ENCODE measurements at regions of chr1 and their contacts with region 1.

Region 1: DNA sequence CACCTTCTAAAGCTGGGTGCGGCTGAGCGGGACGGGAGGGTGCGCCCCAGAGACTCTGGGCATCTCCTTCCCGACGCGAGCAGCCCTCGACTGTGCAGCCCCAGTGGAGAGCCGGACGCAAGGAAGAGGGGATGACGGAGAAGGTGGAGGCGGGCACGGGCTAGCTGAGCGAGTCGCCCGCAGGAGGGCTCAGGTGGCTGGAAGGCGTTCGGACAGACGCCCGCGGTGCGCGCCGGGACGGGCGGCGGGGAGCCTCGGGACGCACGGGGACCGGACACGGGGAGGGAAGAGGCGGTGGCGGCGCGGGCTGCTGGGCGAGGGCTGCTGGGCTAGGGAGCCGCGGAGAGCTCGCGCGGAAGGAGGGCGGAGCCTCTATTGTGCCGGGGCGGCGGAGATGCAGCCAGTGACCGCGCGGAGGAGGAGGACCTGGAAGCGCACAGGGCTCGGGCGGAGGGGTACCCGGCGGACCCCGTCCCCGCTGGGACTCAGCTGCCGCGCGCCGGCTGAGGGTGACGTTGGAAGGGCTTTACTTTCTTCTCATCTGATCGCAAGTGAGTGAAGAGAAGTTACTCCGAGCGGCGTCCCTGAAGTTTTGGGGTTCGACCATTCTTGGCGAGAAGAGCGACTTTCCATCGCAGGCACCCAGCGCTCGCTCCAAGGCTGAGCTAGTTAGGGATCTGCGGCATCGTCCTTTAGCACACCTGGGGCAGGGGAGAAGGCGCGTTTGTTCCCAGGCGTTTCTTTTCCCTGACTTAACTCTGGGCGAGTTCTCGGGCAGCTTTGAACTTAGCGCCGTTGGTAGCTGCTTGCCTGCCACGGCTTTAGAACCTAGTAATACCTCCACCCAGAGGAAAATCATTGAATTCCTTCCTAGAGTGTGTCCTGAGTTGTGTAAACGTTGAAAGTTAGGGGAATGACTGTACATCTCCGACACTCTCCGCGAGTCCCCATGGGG is at the start of gene OLFML2B:
- DNase-seq: peak; percentile 70
- H3K4me3 ChIP-seq: peak within 1 kb of the TSS; percentile 9 to 55 (median 45)
- H3K27ac ChIP-seq: no peak within 1 kb of the TSS
- H3K4me1 ChIP-seq: peaks cover 8% of the 10 kb centered on the region
- H3K27me3 ChIP-seq: peaks cover 0 to 3% of the 10 kb centered on the region in 2 experiments
- CTCF ChIP-seq: peak; percentile 19 to 31
- POLR2A ChIP-seq: no peak
- total RNA-seq, gene OLFML2B: 0.51 and 0.62 TPM in 2 replicates

Region 2: GRCh38 chr1:161864577-161864976 is 159.2 kb before region 1 on chr1:
- CTCF ChIA-PET with region 1: interaction called, 28 read pairs
- POLR2A ChIA-PET with region 1: no interaction called
- dilution Hi-C with region 1: no loop called
- intact Hi-C with region 1: no loop called
- DNase-seq: peak; percentile 69
- H3K4me3 ChIP-seq: no peak overlapping the region
- H3K27ac ChIP-seq: no peak overlapping the region
- H3K4me1 ChIP-seq: peaks cover 6% of the 10 kb centered on the region
- H3K27me3 ChIP-seq: no peaks in the 10 kb centered on the region
- CTCF ChIP-seq: peak; percentile 7 to 27
- POLR2A ChIP-seq: no peak

Region 3: GRCh38 chr1:161915051-161915503 is 108.7 kb before region 1 on chr1:
- CTCF ChIA-PET with region 1: no interaction called
- POLR2A ChIA-PET with region 1: no interaction called
- dilution Hi-C with region 1: no loop called
- intact Hi-C with region 1: loop called (anchors 5 kb)
- DNase-seq: no peak
- H3K4me3 ChIP-seq: no peak overlapping the region
- H3K27ac ChIP-seq: no peak overlapping the region
- H3K4me1 ChIP-seq: peaks cover 10% of the 10 kb centered on the region
- H3K27me3 ChIP-seq: no peaks in the 10 kb centered on the region
- CTCF ChIP-seq: no peak
- POLR2A ChIP-seq: no peak

Region 4: DNA sequence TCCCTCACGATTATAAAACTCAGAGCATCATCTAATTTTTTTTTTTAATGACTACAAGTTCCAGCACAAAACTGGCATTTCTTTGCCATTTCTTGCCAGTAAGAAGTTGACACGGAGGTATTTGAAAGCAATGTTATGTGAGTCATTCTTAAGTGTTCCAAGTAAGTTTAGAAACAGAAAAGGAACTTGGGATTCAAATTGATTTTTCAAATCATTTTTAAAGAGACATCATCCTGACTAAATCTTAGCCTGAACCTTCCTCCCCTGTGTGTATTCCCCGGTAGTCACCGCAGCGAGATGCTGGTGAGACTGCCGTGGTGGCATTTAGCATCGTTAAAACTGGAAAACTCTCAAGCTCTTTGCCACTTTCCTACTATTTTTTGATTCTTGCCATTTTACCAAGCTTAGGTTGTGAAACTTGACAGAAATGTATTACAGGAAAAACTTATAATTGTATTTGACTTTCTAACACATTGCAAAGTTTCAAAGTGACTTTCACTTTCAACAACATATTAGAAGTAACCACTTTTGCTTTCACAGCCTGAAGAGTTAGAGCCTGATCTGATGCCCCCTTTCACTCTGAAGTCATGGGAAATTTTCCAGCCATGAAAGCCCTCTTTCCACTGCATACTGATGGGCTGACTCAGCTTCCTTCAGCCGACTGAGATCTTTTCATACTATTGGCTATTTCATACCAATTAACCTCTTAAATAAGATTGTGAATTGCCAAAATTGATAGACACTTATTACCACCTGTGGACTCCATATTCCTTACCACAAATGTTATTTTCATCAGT is 61.5 kb before region 1 on chr1:
- CTCF ChIA-PET with region 1: interaction called, 5 read pairs
- POLR2A ChIA-PET with region 1: interaction called, 4 read pairs
- dilution Hi-C with region 1: no loop called
- intact Hi-C with region 1: loop called (anchors 1 kb)
- DNase-seq: peak; percentile 96
- H3K4me3 ChIP-seq: peak overlapping the region in 2 of 3 experiments; percentile 17 to 80
- H3K27ac ChIP-seq: peak overlapping the region; percentile 98
- H3K4me1 ChIP-seq: peaks cover 21% of the 10 kb centered on the region
- H3K27me3 ChIP-seq: no peaks in the 10 kb centered on the region
- CTCF ChIP-seq: no peak
- POLR2A ChIP-seq: no peak

Measured in endothelial cell of umbilical vein (primary cell).